ENCODE measurements at regions of chr12 and their contacts with region 1.

Region 1: GRCh38 chr12:30806989-30807694 is 52.4 kb upstream of the CAPRIN2 start:
- DNase-seq: peak in 4 of 5 donors; percentile 44 to 55 (median 53)
- H3K4me3 ChIP-seq: no peak overlapping the region
- H3K4me3 Mint-ChIP-seq: no peak overlapping the region
- H3K27ac ChIP-seq: no peak overlapping the region
- H3K27ac Mint-ChIP-seq: no peak overlapping the region
- H3K4me1 ChIP-seq: no peaks in the 10 kb centered on the region
- H3K4me1 Mint-ChIP-seq: no peaks in the 10 kb centered on the region
- H3K27me3 ChIP-seq: no peaks in the 10 kb centered on the region
- H3K27me3 Mint-ChIP-seq: peaks cover 11 to 12% of the 10 kb centered on the region in 2 donors

Region 2: DNA sequence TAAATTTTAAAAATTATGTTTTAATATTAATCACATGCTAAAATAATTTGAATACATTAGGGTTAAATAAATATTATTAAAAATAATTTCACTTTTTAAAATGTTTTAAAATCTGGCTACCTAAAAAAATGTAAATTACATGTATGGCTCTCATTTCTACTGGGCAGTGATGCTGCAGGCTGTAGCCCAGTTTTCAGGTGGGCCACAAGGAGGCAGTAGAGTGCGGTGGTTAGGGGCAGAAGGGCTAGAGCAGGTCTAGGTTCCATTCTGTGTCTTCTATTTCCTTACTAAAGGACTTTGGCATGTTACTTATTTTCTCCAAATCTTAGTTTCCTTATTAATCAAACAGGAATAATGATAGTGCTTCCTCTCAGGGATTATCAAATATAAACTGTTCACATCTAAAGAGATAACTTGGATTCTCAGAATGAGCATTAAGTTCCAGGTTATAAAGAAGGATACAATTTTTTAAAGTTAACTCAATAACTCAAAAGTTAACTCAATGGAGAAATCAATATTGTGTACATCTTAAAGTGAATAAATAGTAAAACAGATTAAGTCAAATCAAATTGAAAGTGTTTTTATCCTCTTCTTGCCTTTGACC is 1254.7 kb before region 1 on chr12:
- CTCF ChIA-PET with region 1: interaction called, 40 read pairs
- POLR2A ChIA-PET with region 1: no interaction called
- intact Hi-C with region 1: loop called (anchors 1 kb)
- DNase-seq: peak; percentile 41 to 51 (median 48)
- H3K4me3 ChIP-seq: no peak overlapping the region
- H3K4me3 Mint-ChIP-seq: no peak overlapping the region
- H3K27ac ChIP-seq: no peak overlapping the region
- H3K27ac Mint-ChIP-seq: no peak overlapping the region
- H3K4me1 ChIP-seq: no peaks in the 10 kb centered on the region
- H3K4me1 Mint-ChIP-seq: peaks cover 0 to 2% (median 0%) of the 10 kb centered on the region in 4 donors
- H3K27me3 ChIP-seq: no peaks in the 10 kb centered on the region
- H3K27me3 Mint-ChIP-seq: peaks cover 2 to 4% of the 10 kb centered on the region in 2 donors

Region 3: DNA sequence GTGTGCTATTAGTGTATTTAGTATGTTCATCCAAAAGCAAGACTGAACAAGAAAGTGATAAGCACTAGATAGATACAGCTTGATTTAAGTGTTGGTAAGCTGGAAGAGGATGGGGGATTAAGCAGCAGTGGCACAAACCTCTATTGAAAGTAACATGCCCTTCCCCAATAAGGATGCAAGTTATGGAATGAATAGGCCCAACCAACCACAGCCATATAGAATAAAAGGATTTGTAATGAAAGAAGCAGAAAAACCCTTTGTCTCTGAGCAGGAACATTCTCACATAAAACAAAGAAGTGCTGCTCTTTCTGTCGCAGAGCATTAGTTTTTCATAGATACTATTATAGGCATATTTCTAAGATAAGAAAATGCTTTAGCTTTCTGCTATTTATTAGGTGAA is 422.2 kb before region 1 on chr12:
- CTCF ChIA-PET with region 1: no interaction called
- POLR2A ChIA-PET with region 1: no interaction called
- intact Hi-C with region 1: no loop called
- DNase-seq: no peak
- H3K4me3 ChIP-seq: no peak overlapping the region
- H3K4me3 Mint-ChIP-seq: no peak overlapping the region
- H3K27ac ChIP-seq: no peak overlapping the region
- H3K27ac Mint-ChIP-seq: no peak overlapping the region
- H3K4me1 ChIP-seq: no peaks in the 10 kb centered on the region
- H3K4me1 Mint-ChIP-seq: no peaks in the 10 kb centered on the region
- H3K27me3 ChIP-seq: no peaks in the 10 kb centered on the region
- H3K27me3 Mint-ChIP-seq: no peaks in the 10 kb centered on the region

Region 4: DNA sequence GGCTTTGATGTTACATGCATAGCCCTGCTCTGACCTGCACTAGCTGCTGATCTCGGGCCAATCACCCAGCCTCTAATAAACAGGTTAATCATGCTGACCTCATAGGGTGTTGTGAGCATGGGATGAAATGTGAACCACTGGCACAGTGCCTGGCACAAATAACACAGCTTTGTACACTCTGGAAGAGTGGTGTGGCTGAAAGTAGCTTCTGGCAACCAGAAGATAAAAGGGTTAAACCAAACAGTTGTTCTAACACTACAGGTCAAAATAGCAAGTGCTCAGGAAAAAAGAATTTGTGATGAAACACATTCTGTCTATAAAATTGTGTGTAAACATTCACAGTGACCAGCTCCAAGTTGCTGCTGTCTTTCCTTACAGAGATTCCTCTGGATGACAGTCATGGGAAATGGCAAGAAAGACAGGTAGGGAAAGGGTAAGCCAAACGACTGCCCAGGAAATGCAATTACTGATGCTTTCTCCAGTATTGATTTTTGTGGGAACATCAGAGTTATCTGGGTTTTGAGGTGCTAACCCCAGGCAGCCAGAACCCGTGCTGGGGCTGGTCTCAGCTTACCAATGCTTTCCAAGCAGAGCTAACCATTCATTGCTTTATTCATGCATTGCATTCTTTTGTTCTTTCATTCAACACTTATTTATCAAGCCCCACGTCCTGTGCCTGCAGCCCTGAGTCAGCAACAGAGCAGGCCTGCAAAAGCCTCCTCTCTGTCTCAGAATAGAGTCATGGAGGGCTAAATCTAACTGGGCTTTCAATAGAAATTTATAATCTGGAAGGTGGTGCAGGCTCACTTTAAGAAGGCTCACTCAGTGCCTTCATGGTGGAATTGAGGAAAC is 14.3 kb before region 1 on chr12:
- CTCF ChIA-PET with region 1: interaction called, 15 read pairs
- POLR2A ChIA-PET with region 1: no interaction called
- intact Hi-C with region 1: no loop called
- DNase-seq: no peak
- H3K4me3 ChIP-seq: no peak overlapping the region
- H3K4me3 Mint-ChIP-seq: peak overlapping the region in 2 of 8 donors; percentile 35 to 37
- H3K27ac ChIP-seq: no peak overlapping the region
- H3K27ac Mint-ChIP-seq: no peak overlapping the region
- H3K4me1 ChIP-seq: peaks cover 11% of the 10 kb centered on the region
- H3K4me1 Mint-ChIP-seq: peaks cover 7 to 27% (median 13%) of the 10 kb centered on the region in 4 donors
- H3K27me3 ChIP-seq: no peaks in the 10 kb centered on the region
- H3K27me3 Mint-ChIP-seq: peaks cover 18 to 25% of the 10 kb centered on the region in 2 donors

Region 5: GRCh38 chr12:30953951-30954751 is 147.0 kb after region 1 on chr12:
- CTCF ChIA-PET with region 1: no interaction called
- POLR2A ChIA-PET with region 1: no interaction called
- intact Hi-C with region 1: no loop called
- DNase-seq: no peak
- H3K4me3 ChIP-seq: no peak overlapping the region
- H3K4me3 Mint-ChIP-seq: no peak overlapping the region
- H3K27ac ChIP-seq: no peak overlapping the region
- H3K27ac Mint-ChIP-seq: no peak overlapping the region
- H3K4me1 ChIP-seq: no peaks in the 10 kb centered on the region
- H3K4me1 Mint-ChIP-seq: no peaks in the 10 kb centered on the region
- H3K27me3 ChIP-seq: no peaks in the 10 kb centered on the region
- H3K27me3 Mint-ChIP-seq: peaks cover 9 to 14% of the 10 kb centered on the region in 2 donors

Region 6: GRCh38 chr12:30985814-30986452 is 178.8 kb after region 1 on chr12:
- CTCF ChIA-PET with region 1: no interaction called
- POLR2A ChIA-PET with region 1: no interaction called
- intact Hi-C with region 1: no loop called
- DNase-seq: no peak
- H3K4me3 ChIP-seq: no peak overlapping the region
- H3K4me3 Mint-ChIP-seq: no peak overlapping the region
- H3K27ac ChIP-seq: no peak overlapping the region
- H3K27ac Mint-ChIP-seq: no peak overlapping the region
- H3K4me1 ChIP-seq: no peaks in the 10 kb centered on the region
- H3K4me1 Mint-ChIP-seq: no peaks in the 10 kb centered on the region
- H3K27me3 ChIP-seq: no peaks in the 10 kb centered on the region
- H3K27me3 Mint-ChIP-seq: no peaks in the 10 kb centered on the region

Region 7: GRCh38 chr12:31117203-31118011 is 310.3 kb after region 1 on chr12:
- CTCF ChIA-PET with region 1: no interaction called
- POLR2A ChIA-PET with region 1: no interaction called
- intact Hi-C with region 1: no loop called
- DNase-seq: peak; percentile 39 to 54 (median 45)
- H3K4me3 ChIP-seq: peak overlapping the region; percentile 22 to 62
- H3K4me3 Mint-ChIP-seq: peak overlapping the region; percentile 70 to 91 (median 81)
- H3K27ac ChIP-seq: peak overlapping the region; percentile 4
- H3K27ac Mint-ChIP-seq: peak overlapping the region in 3 of 7 donors; percentile 24 to 72 (median 36)
- H3K4me1 ChIP-seq: peaks cover 24% of the 10 kb centered on the region
- H3K4me1 Mint-ChIP-seq: peaks cover 0 to 35% (median 2%) of the 10 kb centered on the region in 4 donors
- H3K27me3 ChIP-seq: no peaks in the 10 kb centered on the region
- H3K27me3 Mint-ChIP-seq: peaks cover 2 to 33% of the 10 kb centered on the region in 2 donors

Measured in CD4-positive, alpha-beta memory T cell (primary cell).